HEK293T (cell line): ENCODE measurements at regions of chr2 and their contacts with region 1.

Region 1: GRCh38 chr2:95121407-95122196 is at the start of gene MRPS5:
- DNase-seq: peak; percentile 94

Region 2: DNA sequence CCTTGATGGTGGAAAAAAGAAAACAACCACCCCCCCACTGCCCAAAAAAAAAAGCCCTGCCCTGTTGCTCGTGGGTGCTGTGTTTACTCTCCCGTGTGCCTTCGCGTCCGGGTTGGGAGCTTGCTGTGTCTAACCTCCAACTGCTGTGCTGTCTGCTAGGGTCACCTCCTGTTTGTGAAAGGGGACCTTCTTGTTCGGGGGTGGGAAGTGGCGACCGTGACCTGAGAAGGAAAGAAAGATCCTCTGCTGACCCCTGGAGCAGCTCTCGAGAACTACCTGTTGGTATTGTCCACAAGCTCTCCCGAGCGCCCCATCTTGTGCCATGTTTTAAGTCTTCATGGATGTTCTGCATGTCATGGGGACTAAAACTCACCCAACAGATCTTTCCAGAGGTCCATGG is 68.1 kb before region 1 on chr2:
- CTCF ChIA-PET with region 1: no interaction called
- POLR2A ChIA-PET with region 1: no interaction called
- DNase-seq: no peak

Region 3: DNA sequence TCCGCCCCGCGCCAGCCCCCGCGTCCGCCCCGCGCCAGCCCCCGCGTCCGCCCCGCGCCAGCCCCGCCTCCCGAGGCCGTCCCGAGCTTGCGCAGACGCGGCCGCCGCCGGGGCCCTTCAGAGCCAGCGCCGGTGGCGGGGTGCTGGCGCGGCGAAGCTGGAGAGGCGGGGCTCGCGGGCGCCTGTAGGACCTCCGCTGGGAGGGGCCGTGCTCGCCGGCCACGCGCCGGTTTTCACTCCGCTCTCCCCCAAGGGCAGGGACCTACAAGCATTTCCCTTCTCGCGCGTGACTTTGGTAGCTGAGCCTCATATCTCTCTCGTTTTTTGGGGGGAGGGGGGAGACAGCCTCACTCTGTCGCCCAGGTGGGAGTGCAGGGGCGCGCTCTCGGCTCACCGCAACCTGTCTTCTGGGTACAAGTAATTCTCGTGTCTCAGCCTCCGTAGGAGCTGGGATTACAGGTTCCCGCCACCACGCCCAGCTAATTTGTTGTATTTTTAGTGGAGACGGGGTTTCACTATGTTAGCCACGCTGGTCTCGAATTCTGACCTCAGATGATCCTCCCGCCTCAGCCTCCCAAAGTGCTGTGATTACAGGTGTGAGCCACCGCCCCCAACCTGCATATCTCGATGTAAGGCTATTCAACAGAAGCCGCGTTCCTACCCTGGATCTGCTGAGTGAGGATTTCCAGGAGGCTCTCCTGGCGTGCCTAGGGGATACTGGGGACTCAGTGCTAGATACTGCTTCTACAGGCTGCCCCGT is 38.3 kb after region 1 on chr2 and contains the start of gene ZNF514:
- CTCF ChIA-PET with region 1: interaction called, 3 read pairs
- POLR2A ChIA-PET with region 1: interaction called, 38 read pairs
- DNase-seq: peak; percentile 77

Region 4: GRCh38 chr2:95165129-95166064 is 43.8 kb after region 1 on chr2 and contains the start of gene ZNF2:
- CTCF ChIA-PET with region 1: interaction called, 3 read pairs
- POLR2A ChIA-PET with region 1: interaction called, 38 read pairs
- DNase-seq: peak; percentile 98